AG04449 (cell line): ENCODE measurements at regions of chr3 and their contacts with region 1.

Region 1: GRCh38 chr3:127779747-127780146 is 42.6 kb downstream of the MGLL start:
- DNase-seq: no peak
- H3K4me3 ChIP-seq: no peak overlapping the region
- CTCF ChIP-seq: no peak

Region 2: DNA sequence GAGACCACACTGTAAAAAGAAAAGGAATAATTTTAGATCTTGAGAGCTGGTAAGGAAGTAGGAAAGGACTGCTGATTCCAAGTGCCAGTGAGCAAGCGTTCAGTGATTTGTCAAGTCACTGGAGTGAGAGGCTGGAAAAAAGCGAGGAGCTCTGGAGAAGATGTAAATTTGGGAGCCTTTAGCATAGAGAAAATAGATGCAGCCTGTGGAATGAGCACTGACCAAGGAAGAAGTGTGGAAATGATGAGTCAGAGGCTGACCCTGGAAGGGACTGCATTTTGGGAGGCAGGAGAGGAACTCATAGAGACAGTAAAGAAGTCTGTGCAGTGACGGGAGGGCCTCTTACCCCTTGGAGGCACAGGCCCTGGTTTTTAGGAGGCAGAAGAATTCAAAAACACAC is 124.1 kb before region 1 on chr3:
- CTCF ChIA-PET with region 1: no interaction called
- POLR2A ChIA-PET with region 1: no interaction called
- DNase-seq: peak; percentile 31
- H3K4me3 ChIP-seq: no peak overlapping the region
- CTCF ChIP-seq: no peak

Region 3: GRCh38 chr3:127747723-127748521 is 31.8 kb before region 1 on chr3:
- CTCF ChIA-PET with region 1: no interaction called
- POLR2A ChIA-PET with region 1: no interaction called
- DNase-seq: peak; percentile 86
- H3K4me3 ChIP-seq: no peak overlapping the region
- CTCF ChIP-seq: no peak

Region 4: GRCh38 chr3:127791211-127791946 is 11.6 kb after region 1 on chr3:
- CTCF ChIA-PET with region 1: interaction called, 22 read pairs
- POLR2A ChIA-PET with region 1: interaction called, 3 read pairs
- DNase-seq: peak; percentile 42
- H3K4me3 ChIP-seq: no peak overlapping the region
- CTCF ChIP-seq: peak; percentile 47